Activated T-helper 2 cell treated with anti-CD3 and anti-CD28 coated beads, Interferon-gamma antibody, Interleukin-2, Interleukin-4, amounts not matched to agents 10 μg/mL and 5 μg/mL and 100 μg/mL, durations not matched to agents 14 hours and 24 hours and 36 hours (primary cell): ENCODE measurements at regions of chr3 and their contacts with region 1.

Region 1: DNA sequence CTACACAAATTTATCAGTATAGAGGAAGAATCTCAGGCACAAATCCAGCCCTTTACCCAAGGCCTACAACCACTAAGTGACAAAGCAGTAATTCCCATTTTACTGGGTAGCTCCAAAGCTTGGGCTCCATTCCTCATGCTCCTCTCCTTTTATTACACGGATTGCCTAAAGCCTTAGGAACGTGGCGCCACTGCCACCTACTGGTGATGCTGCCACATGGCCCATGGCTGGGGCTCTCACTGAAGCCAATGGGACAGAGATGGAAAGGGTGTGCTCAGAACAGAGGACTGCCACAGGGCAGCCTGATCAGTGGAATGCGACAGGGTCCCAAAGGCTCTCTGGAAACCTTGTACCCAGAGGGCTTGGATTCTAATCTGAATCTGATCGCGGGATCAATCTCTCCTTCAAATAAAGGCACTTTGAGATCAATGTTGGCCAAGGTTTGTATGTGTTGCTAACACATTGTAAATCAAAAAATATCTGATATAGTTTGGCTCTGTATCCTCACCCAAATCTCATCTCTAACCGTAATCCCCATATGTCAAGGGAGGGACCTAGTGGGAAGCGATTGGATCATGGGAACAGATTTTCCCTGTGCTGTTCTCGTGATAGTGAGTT is 33.5 kb upstream of the LYZL4 start:
- DNase-seq: peak; percentile 52
- H3K4me3 Mint-ChIP-seq: no peak overlapping the region
- H3K27ac Mint-ChIP-seq: no peak overlapping the region
- H3K4me1 Mint-ChIP-seq: no peaks in the 10 kb centered on the region
- H3K27me3 Mint-ChIP-seq: peaks cover 2% of the 10 kb centered on the region

Region 2: GRCh38 chr3:41893977-41894376 is 550.0 kb before region 1 on chr3:
- intact Hi-C with region 1: loop called (anchors 10 kb)
- DNase-seq: no peak
- H3K4me3 Mint-ChIP-seq: no peak overlapping the region
- H3K27ac Mint-ChIP-seq: no peak overlapping the region
- H3K4me1 Mint-ChIP-seq: no peaks in the 10 kb centered on the region
- H3K27me3 Mint-ChIP-seq: no peaks in the 10 kb centered on the region

Region 3: GRCh38 chr3:42229942-42230688 is 213.8 kb before region 1 on chr3:
- intact Hi-C with region 1: loop called (anchors 5 kb)
- DNase-seq: no peak
- H3K4me3 Mint-ChIP-seq: no peak overlapping the region
- H3K27ac Mint-ChIP-seq: no peak overlapping the region
- H3K4me1 Mint-ChIP-seq: peaks cover 3% of the 10 kb centered on the region
- H3K27me3 Mint-ChIP-seq: peaks cover 10% of the 10 kb centered on the region

Region 4: GRCh38 chr3:42247576-42248027 is 196.3 kb before region 1 on chr3:
- intact Hi-C with region 1: loop called (anchors 1 kb)
- DNase-seq: peak; percentile 46
- H3K4me3 Mint-ChIP-seq: no peak overlapping the region
- H3K27ac Mint-ChIP-seq: no peak overlapping the region
- H3K4me1 Mint-ChIP-seq: peaks cover 7% of the 10 kb centered on the region
- H3K27me3 Mint-ChIP-seq: peaks cover 35% of the 10 kb centered on the region

Region 5: GRCh38 chr3:42410370-42411131 is 33.4 kb before region 1 on chr3 and contains the start of gene LYZL4:
- intact Hi-C with region 1: no loop called
- DNase-seq: no peak
- H3K4me3 Mint-ChIP-seq: no peak within 1 kb of the TSS
- H3K27ac Mint-ChIP-seq: no peak within 1 kb of the TSS
- H3K4me1 Mint-ChIP-seq: no peaks in the 10 kb centered on the region
- H3K27me3 Mint-ChIP-seq: peaks cover 8% of the 10 kb centered on the region
- total RNA-seq, gene LYZL4: not detected in 2 replicates